ENCODE measurements at regions of chrX and their contacts with region 1.

Region 1: DNA sequence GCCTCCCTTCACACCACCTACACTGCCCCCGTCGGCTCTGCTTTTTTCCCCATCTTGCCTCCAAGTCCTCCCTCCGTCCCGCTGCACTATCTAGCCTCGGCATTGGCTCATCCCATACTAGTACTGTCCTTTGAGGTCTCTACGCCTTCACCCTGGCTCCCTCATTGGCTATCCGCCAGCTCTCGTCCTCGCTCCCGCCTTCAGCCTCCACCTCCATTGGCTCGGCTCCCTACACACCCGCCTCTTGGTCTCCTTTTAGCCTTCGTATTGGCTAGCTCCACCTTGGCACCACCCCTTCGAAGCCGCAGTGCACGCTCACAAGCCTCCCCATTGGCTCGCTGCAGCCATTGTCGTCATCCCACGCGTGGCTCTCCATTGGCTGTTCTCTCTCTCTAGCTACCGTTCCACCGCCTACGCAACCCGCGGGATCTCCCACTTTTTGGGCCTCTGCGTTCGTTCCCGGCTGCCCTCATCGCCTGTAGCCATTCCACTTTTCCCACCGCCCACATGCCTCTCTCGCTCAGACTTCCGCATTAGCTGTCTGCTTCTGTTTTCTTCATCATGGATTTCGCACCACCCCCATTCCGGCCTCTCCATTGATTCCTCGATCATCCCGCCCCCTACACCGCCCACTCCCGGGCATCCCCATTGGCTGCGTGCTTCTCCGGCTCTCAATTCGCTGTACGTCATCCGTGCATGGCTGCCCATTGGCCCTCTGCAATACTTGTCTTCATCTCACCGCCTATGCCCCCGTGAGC is 404 bp upstream of the PPP1R3F start:
- DNase-seq: peak; percentile 93 to 98
- H3K4me3 ChIP-seq: peak overlapping the region; percentile 60 to 93
- H3K27ac ChIP-seq: peak overlapping the region; percentile 90 to 93
- H3K4me1 ChIP-seq: peaks cover 0 to 2% of the 10 kb centered on the region in 2 donors
- H3K27me3 ChIP-seq: no peaks in the 10 kb centered on the region
- CTCF ChIP-seq: no peak

Region 2: DNA sequence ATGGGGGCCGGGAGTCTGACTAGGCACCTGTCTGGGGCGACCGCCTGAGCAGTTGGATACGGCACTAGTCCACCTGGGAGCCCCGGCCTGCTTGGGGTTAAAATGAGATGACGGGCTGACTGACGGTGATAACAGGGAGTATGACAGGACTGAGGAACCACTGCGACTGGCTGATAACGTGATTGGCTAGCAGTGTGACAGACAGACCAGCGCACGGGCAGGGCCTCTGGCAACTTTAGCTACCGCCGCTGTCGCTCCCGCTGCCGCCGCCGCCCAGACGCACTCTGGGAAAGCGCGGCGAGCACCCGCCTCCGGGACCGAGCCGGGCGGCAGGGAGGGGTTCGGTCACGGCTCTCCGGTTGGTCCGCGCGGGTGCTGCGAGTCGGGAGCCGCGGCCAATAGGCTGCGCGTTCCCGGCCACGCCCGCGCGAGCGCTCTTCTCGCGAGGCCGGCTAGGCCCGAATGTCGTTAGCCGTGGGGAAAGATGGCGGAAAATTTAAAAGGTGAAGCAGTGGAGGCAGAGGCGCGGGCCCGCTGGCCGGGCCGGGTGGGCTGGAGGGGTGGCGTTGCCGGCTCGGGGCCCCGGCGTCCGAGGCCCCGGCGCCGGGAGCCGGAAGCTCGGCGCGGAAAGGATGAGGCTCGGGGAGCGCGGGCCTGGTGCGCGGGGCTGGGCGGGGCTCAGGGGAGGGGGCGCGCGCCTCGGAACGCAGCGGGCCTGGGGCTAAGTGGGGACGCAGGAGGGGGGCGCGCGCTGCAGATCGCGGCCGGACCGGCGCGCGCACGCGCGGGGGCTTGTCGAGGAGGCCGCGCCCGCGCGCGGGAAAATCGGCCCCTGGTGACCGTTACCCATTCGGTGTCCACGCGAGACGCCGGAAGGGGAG is 572.6 kb before region 1 on chrX and contains the start of gene SUV39H1:
- intact Hi-C with region 1: loop called (anchors 2 kb)
- DNase-seq: peak; percentile 47 to 93
- H3K4me3 ChIP-seq: peak within 1 kb of the TSS; percentile 77 to 88
- H3K27ac ChIP-seq: peak within 1 kb of the TSS; percentile 87 to 92
- H3K4me1 ChIP-seq: no peaks in the 10 kb centered on the region
- H3K27me3 ChIP-seq: no peaks in the 10 kb centered on the region
- CTCF ChIP-seq: no peak
- total RNA-seq, gene SUV39H1: 0.21 TPM

Region 3: DNA sequence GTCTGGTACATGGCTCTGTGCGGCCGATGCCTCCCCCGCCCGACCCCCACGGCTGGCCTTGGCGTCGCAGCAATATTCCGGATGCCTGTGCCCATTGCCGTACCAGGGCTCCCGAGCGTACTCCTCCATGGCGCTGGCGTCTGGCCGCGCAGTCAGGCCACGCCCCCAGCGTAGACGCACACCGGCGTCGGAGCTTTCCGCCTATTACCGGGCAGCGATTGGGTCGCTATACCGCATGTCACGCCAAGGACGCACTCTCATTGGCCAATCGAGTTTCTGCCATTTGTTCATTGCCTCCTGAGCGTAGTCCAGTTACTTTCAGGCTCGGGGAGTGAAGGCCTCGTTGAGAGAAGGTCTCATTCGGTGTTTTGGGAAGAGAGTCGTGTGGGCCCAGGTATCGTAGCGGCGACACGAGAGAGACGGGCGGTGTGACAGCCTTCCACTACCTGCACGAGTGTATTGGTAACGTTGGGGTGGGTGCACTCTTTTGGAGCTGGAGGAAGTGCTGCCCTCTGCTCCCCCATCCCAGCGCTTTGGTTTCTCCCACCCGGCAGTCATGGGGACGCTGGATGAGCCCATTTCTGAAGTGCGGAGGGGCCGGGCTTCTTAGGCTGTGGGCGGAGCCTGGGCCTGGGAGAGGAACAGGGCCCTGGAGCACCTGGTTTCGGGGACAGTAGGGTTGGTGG is 371.4 kb before region 1 on chrX and contains the starts of genes PQBP1 and TIMM17B:
- intact Hi-C with region 1: no loop called
- DNase-seq: peak; percentile 72 to 93
- H3K4me3 ChIP-seq: peak within 1 kb of the TSS; percentile 60 to 69
- H3K27ac ChIP-seq: peak within 1 kb of the TSS; percentile 94 to 97
- H3K4me1 ChIP-seq: peaks cover 3 to 9% of the 10 kb centered on the region in 2 donors
- H3K27me3 ChIP-seq: no peaks in the 10 kb centered on the region
- CTCF ChIP-seq: no peak
- total RNA-seq, gene PQBP1: 14.8 TPM
- total RNA-seq, gene TIMM17B: 15.3 TPM

Region 4: DNA sequence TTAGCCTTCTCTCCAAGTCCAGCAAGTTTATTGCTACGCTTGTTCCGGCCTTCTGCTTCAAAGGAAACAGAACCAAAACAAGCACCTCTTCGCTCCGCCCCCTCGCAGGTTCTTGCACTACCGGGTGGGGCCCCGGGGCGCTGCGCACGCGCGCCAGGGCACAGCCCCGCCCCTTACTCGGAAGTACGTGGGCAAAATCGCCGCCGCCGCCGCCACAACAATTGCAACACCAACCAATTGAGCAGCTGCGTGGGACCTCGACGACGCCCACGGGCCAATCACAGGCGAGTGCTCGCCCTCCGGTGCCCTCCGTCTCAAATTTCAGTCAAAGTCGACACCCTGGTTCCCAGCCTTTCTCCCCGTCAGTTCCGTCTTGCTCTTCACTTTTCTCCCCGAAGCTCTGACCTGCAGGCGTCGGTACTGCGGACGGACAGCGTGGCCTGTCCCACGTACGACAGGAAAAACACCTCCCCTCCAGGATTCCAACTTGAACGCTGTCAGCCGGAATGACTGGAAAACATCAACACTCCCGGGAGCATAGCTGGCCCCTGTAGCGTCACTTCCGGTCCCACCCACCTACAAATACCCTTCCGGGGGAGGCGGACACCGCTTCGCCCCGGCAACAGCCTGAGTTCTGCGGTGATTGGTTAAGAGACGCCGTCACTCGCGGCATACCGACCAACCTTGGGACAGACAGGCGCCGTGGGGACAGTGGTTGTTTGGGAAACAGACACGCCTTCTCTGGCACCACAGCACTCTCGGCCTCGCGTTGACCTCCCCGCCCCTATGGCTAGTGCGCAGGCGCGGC is 311.2 kb before region 1 on chrX:
- intact Hi-C with region 1: loop called (anchors 2 kb)
- DNase-seq: peak; percentile 90 to 98
- H3K4me3 ChIP-seq: peak overlapping the region; percentile 58 to 86
- H3K27ac ChIP-seq: peak overlapping the region; percentile 90 to 92
- H3K4me1 ChIP-seq: no peaks in the 10 kb centered on the region
- H3K27me3 ChIP-seq: no peaks in the 10 kb centered on the region
- CTCF ChIP-seq: no peak

Region 5: GRCh38 chrX:49002091-49002935 is 266.9 kb before region 1 on chrX and contains the start of gene GRIPAP1:
- intact Hi-C with region 1: no loop called
- DNase-seq: peak; percentile 12 to 83
- H3K4me3 ChIP-seq: peak within 1 kb of the TSS; percentile 59 to 66
- H3K27ac ChIP-seq: peak within 1 kb of the TSS; percentile 65 to 78
- H3K4me1 ChIP-seq: peaks cover 0 to 4% of the 10 kb centered on the region in 2 donors
- H3K27me3 ChIP-seq: no peaks in the 10 kb centered on the region
- CTCF ChIP-seq: no peak
- total RNA-seq, gene GRIPAP1: 15.0 TPM

Region 6: DNA sequence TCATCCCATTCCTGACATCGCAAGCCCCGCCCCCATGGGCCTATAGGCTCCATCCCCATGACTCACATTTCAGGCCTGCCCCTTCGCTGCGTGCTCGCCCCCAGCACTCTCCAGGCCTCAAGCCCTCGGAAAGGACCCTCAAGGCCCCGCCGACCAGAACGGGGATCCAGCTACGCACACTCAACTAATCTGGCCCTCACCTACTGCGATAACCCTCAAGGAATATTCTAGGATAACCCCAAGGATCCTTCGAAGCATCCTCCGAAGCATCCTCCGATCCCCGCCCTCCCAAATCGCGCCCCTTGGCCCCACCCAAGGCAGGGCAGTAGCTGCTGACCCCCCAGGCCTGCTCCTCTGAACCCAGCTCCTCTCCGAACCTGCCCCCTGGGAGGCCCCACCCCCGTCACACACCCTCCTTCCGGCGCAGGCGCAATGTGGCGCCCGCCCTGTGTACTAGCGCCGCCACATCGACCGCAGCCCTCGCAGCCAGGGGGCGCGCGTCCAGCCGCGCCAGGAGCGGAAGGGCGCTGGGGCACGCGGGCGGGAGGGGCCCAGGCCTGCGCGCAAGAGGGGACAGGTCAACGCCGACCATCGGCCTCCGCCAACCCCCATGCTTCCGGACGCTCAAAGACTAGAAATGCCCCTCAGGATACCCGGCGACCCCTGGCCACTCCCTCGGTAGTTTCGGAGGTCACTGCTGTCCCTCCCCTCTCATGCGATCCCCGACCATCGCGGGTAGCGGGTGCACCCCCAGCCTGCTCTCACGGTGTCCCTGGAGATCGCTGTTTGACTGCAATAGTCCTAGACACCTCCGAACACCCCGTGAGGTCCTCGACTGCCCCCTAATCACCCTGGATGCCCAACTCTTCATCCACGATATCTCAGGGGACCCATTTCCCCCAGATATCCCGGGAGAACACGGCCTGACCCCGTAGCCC is 113.0 kb before region 1 on chrX:
- intact Hi-C with region 1: loop called (anchors 2 kb)
- DNase-seq: peak; percentile 76 to 93
- H3K4me3 ChIP-seq: peak overlapping the region; percentile 50 to 65
- H3K27ac ChIP-seq: peak overlapping the region; percentile 95 to 97
- H3K4me1 ChIP-seq: no peaks in the 10 kb centered on the region
- H3K27me3 ChIP-seq: no peaks in the 10 kb centered on the region
- CTCF ChIP-seq: peak; percentile 58 to 79 (median 74)

Region 7: DNA sequence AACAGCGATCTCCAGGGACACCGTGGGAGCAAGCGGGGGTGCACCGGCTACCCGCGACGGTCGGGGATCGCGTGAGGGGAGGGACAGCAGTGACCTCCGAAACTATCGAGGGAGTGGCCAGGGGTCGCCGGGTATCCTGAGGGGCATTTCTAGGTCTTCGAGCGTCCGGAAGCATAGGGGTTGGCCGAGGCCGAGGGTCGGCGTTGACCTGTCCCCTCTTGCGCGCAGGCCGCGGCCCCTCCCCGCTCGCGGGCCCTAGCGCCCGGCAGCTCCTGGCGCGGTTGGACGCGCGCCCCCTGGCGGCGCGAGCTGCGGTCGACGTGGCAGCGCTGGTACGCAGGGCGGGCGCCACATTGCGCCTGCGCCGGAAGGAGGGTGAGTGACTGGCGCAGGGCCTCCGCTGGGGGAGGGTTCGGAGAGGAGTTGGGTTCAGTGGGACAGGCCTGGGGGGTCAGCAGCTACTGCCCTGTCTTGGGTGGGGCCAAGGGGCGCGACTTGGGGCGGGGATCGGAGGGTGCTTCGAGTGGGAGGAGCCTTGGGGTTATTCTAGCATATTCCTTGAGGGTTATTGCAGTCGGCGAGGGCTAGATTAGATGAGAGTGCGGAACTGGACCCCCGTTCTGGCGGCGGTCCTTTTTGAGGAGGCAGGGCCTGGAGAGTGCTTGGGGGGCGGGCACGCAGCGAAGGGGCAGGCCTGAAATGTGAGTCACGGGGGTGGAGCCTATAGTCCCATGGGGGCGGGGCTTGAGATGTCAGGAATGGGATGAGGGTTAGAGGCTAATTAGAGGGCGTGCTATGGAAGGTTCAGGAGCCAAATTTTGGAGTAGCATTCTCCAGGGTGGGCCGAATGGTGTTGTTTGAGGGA is 105.4 kb before region 1 on chrX:
- intact Hi-C with region 1: loop called (anchors 2 kb)
- DNase-seq: peak; percentile 65 to 92
- H3K4me3 ChIP-seq: peak overlapping the region; percentile 30 to 64
- H3K27ac ChIP-seq: peak overlapping the region; percentile 88 to 91
- H3K4me1 ChIP-seq: peaks cover 0 to 4% of the 10 kb centered on the region in 2 donors
- H3K27me3 ChIP-seq: no peaks in the 10 kb centered on the region
- CTCF ChIP-seq: peak; percentile 28 to 96 (median 51)

Region 8: DNA sequence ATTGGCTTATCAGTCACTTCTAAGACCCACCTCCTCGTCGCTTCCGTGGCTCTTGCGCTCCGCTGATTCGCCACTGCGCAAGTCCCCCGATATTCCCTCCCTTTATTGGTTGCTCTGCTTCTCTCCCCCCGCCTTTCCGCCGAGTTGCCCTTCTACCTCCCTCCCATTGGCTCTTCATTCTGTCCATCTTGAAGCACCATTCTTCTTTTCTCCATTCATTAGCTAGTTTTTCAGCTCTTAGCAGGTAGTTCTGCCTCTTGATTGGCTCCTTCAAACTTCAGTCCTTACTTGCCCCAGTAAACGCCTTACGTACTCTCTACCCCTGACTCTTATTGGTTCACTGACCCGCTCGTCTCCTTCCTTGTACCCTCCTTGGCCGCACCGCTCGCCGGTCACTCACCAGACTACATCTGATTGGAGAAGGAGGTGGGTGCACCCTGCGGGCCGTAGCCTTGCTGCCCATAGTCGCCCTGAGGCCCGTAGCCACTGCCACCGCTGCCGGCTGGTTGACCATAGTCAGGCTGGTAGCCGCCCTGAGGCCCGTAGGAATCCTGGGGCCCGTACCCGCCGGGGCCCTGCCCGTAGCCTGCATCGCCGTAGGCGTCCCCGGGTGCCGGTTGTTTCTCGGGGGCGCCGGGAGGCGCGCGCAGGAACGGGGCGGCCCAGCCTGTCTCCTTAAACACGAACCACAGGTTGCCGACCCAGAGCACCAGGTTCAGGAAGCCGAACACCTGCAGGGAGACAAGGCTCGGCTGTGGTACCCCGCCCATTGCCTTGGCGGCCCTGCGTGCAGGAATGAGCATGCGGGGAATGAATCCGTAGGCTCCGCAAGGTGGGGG is 77.9 kb before region 1 on chrX:
- intact Hi-C with region 1: loop called (anchors 1 kb)
- DNase-seq: peak; percentile 85 to 96
- H3K4me3 ChIP-seq: peak overlapping the region; percentile 57 to 78
- H3K27ac ChIP-seq: peak overlapping the region; percentile 81
- H3K4me1 ChIP-seq: no peaks in the 10 kb centered on the region
- H3K27me3 ChIP-seq: no peaks in the 10 kb centered on the region
- CTCF ChIP-seq: no peak

Region 9: GRCh38 chrX:49199906-49200771 is 69.0 kb before region 1 on chrX and contains the start of gene SYP:
- intact Hi-C with region 1: loop called (anchors 1 kb)
- DNase-seq: peak; percentile 65 to 95
- H3K4me3 ChIP-seq: peak within 1 kb of the TSS; percentile 33 to 61
- H3K27ac ChIP-seq: peak within 1 kb of the TSS; percentile 51 to 59
- H3K4me1 ChIP-seq: no peaks in the 10 kb centered on the region
- H3K27me3 ChIP-seq: no peaks in the 10 kb centered on the region
- CTCF ChIP-seq: no peak
- total RNA-seq, gene SYP: 0.53 TPM

Measured in ascending aorta (tissue), 2 donors.